Activated CD4-positive, alpha-beta memory T cell treated with anti-CD3 and anti-CD28 coated beads, Interleukin-2, amount 10 ng/mL, durations not matched to agents 7 days and 5 days (primary cell): ENCODE measurements at regions of chr22 and their contacts with region 1.

Region 1: GRCh38 chr22:23893943-23894709 is at the start of gene MIF:
- DNase-seq: peak; percentile 98
- H3K4me3 Mint-ChIP-seq: peak within 1 kb of the TSS; percentile 95
- H3K27ac Mint-ChIP-seq: peak within 1 kb of the TSS; percentile 99
- H3K4me1 Mint-ChIP-seq: peaks cover 34% of the 10 kb centered on the region
- H3K27me3 Mint-ChIP-seq: no peaks in the 10 kb centered on the region
- total RNA-seq, gene MIF: 836 to 882 TPM

Region 2: GRCh38 chr22:23548501-23549197 is 345.5 kb before region 1 on chr22:
- CTCF ChIA-PET with region 1: no interaction called
- POLR2A ChIA-PET with region 1: no interaction called
- DNase-seq: no peak
- H3K4me3 Mint-ChIP-seq: no peak overlapping the region
- H3K27ac Mint-ChIP-seq: no peak overlapping the region
- H3K4me1 Mint-ChIP-seq: no peaks in the 10 kb centered on the region
- H3K27me3 Mint-ChIP-seq: peaks cover 5% of the 10 kb centered on the region

Region 3: DNA sequence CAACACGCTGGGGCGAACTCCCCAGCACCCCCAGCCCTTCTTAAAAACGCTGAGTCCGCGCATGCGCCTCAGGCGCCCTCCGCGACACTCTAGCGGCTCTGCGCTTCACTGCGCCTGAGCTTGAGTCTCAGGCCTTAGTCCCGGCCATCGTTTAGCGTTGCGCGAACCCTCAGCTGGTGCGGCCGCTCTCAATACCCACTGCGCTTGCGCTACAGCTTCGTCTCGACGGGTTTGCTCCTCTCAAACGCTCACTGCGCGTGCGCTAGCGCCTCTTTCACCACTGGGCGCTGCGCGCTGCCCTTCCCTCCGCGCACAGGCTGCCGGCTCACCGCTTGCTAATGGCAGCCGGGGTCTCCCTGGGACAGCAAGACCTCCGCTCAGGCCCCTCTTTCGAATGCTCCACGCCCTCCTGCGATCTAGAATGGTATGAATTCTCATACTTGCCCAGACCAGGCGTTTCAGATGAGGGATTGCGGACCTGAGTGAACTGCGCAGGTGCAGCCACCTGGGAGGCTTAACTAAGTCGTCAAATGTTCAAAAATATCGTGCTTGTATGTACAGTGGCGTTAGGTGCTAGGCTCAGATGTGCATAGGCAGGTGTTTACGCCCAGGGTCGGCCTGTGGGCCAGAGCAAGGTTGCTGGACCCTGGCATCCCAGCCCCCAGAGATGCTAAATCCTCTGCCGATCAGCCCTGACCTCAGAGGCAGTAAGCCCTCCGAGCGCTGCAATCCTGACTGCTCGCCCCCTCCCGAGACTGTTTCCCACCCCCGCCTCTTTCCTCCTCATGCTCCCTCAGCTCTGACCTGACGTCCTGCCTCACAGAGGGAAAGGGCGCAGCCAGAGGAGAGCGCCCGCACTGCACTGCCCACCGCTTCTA is 36.3 kb before region 1 on chr22 and contains the start of gene SLC2A11:
- CTCF ChIA-PET with region 1: interaction called, 30 read pairs
- POLR2A ChIA-PET with region 1: interaction called, 36 read pairs
- DNase-seq: peak; percentile 95
- H3K4me3 Mint-ChIP-seq: peak within 1 kb of the TSS; percentile 91
- H3K27ac Mint-ChIP-seq: peak within 1 kb of the TSS; percentile 85
- H3K4me1 Mint-ChIP-seq: peaks cover 25% of the 10 kb centered on the region
- H3K27me3 Mint-ChIP-seq: peaks cover 3% of the 10 kb centered on the region
- total RNA-seq, gene SLC2A11: 6.5 TPM

Region 4: GRCh38 chr22:23904573-23905260 is 10.6 kb after region 1 on chr22:
- CTCF ChIA-PET with region 1: interaction called, 15 read pairs
- POLR2A ChIA-PET with region 1: interaction called, 85 read pairs
- DNase-seq: no peak
- H3K4me3 Mint-ChIP-seq: no peak overlapping the region
- H3K27ac Mint-ChIP-seq: no peak overlapping the region
- H3K4me1 Mint-ChIP-seq: no peaks in the 10 kb centered on the region
- H3K27me3 Mint-ChIP-seq: no peaks in the 10 kb centered on the region

Region 5: DNA sequence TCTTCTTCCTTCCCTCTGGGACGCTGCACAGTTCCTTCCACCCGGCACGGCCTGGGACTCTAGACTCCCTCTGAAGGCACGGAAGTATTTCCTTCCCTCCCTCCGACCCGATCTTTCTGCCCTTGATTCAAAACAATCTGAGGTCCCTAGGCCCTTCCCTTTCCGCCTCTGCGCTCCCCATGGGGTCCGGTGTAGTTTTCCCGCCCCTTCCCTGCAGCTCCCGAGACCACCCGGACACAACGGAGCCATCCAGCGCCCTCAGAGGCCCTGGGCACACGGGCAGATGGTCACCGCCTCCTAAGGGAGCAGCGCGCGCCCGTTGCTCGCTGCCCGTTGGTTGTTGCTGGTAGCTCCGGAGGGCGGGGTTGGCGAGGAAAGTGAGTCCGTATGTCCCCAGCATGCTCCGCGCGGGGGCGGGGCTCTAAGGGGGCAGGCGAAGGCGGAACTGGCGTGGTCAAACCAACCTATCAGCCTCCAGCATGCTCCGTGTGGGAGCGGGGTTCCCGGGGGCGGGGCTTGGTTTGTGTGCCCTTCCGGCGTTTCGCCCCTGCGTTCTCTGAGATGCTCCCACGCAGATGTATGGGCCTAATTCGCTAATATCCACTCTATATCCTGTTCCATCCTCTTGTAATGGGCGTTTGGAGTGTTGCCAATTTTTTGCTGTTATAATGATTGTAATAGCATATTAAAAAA is 19.7 kb after region 1 on chr22:
- CTCF ChIA-PET with region 1: interaction called, 31 read pairs
- POLR2A ChIA-PET with region 1: interaction called, 85 read pairs
- DNase-seq: peak; percentile 100
- H3K4me3 Mint-ChIP-seq: peak overlapping the region; percentile 86
- H3K27ac Mint-ChIP-seq: peak overlapping the region; percentile 95
- H3K4me1 Mint-ChIP-seq: peaks cover 27% of the 10 kb centered on the region
- H3K27me3 Mint-ChIP-seq: no peaks in the 10 kb centered on the region

Region 6: GRCh38 chr22:24338726-24339451 is 444.8 kb after region 1 on chr22:
- CTCF ChIA-PET with region 1: no interaction called
- POLR2A ChIA-PET with region 1: no interaction called
- DNase-seq: no peak
- H3K4me3 Mint-ChIP-seq: no peak overlapping the region
- H3K27ac Mint-ChIP-seq: no peak overlapping the region
- H3K4me1 Mint-ChIP-seq: peaks cover 17% of the 10 kb centered on the region
- H3K27me3 Mint-ChIP-seq: no peaks in the 10 kb centered on the region